AG04450 (cell line): ENCODE measurements at regions of chr12 and their contacts with region 1.

Region 1: GRCh38 chr12:130739571-130739970 is 23.5 kb upstream of the RIMBP2 start:
- DNase-seq: no peak
- H3K4me3 ChIP-seq: no peak overlapping the region
- H3K27ac ChIP-seq: no peak overlapping the region
- H3K27me3 ChIP-seq: no peaks in the 10 kb centered on the region
- CTCF ChIP-seq: no peak

Region 2: DNA sequence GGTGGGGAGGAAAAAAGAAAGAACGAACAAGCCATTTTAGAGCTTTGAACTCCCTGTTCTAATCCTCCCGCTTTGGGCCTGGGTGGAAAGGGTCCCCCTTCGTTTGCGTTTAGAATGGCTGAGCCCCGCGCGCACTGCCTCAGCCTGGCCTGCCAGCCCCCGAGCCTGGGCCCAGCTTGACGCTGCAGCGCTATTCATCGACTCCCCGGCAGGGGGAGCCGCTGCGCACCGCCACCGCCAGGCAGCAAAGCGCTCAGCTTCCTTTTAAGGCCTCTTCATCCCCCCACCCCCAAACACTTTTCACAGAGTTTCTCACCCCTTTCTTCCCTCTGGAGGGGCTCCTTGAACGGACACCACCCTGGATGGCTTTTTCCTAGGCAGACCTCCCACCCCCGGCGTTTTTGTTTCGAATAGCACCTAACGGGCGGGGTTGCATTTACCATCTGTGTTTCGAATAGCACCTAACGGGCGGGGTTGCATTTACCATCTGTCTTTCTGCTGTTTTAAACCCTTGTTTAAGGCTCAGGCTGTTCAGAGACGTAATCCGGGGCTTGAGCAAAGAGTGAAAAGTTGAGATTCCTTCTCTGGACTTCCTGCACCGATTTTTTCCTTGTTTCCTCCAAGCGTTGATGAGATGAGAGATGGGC is 458.3 kb before region 1 on chr12:
- CTCF ChIA-PET with region 1: no interaction called
- POLR2A ChIA-PET with region 1: no interaction called
- DNase-seq: no peak
- H3K4me3 ChIP-seq: no peak overlapping the region
- H3K27ac ChIP-seq: no peak overlapping the region
- H3K27me3 ChIP-seq: no peaks in the 10 kb centered on the region
- CTCF ChIP-seq: peak; percentile 8; the same call in 1 of the 2 replicates

Region 3: GRCh38 chr12:130668286-130669204 is 71.0 kb before region 1 on chr12:
- CTCF ChIA-PET with region 1: no interaction called
- POLR2A ChIA-PET with region 1: interaction called, 13 read pairs
- DNase-seq: no peak
- H3K4me3 ChIP-seq: no peak overlapping the region
- H3K27ac ChIP-seq: no peak overlapping the region
- H3K27me3 ChIP-seq: no peaks in the 10 kb centered on the region
- CTCF ChIP-seq: no peak

Region 4: GRCh38 chr12:130680451-130680990 is 59.0 kb before region 1 on chr12:
- CTCF ChIA-PET with region 1: no interaction called
- POLR2A ChIA-PET with region 1: no interaction called
- DNase-seq: no peak
- H3K4me3 ChIP-seq: no peak overlapping the region
- H3K27ac ChIP-seq: no peak overlapping the region
- H3K27me3 ChIP-seq: no peaks in the 10 kb centered on the region
- CTCF ChIP-seq: no peak